ENCODE measurements at regions of chr1 and their contacts with region 1.

Region 1: DNA sequence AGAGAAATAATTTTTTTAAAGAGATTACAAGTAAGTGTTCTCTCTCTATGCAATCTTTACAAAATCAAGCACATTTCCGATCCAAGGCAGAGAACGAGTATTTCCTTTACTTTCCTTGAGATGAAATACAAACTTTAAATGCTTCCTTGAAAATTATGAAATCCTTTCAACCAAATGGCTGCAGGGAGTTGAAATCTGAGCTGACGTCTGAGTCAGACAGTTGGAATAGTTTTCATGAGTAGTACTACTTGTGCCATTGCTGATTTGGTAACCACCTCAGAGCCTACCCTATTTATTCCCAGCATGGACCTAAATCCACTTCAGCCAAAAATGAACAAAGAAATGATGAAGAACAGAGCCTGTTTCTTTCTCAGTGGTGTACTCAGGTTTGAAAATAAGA is 183.6 kb downstream of the GIPC2 start:
- DNase-seq: peak; percentile 94
- H3K4me3 Mint-ChIP-seq: peak overlapping the region; percentile 20
- H3K27ac Mint-ChIP-seq: peak overlapping the region; percentile 63
- H3K4me1 Mint-ChIP-seq: peaks cover 42% of the 10 kb centered on the region
- H3K27me3 Mint-ChIP-seq: no peaks in the 10 kb centered on the region
- CTCF ChIP-seq: no peak

Region 2: DNA sequence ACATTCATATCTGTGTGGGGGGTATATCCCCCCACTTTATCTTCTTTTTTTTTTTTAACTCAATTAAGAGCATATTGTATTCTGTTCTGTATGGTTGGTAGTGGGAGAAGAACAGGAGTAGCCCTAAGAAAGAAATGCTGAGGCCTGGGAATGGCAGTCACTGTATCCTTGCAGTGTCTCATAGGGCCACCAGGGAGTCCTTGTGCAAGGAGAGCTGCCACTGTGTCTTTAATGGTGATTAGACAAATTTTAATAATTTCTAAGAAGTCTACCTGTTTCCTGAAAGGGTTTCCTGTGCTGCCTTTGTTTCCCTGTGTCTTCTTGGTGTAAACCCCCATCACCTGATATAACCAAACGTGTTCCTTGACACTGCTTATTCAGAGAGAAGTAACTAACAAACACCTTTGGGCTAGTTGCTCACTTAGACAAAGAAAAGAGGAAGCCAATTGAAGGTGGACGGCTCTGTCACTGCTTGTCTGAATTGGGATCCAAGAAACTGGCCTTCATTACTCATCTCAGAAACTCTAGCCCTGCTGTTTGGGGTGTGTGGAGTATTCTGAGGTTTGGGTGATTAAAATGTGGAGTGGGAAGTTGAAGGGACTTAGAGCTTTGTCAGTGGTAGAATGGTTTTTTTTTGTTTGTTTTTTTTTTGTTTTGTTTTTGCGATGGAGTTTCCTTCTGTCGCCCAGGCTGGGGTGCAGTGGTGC is 168.3 kb before region 1 on chr1:
- CTCF ChIA-PET with region 1: no interaction called
- POLR2A ChIA-PET with region 1: no interaction called
- intact Hi-C with region 1: no loop called
- DNase-seq: no peak
- H3K4me3 Mint-ChIP-seq: no peak overlapping the region
- H3K27ac Mint-ChIP-seq: no peak overlapping the region
- H3K4me1 Mint-ChIP-seq: peaks cover under 1% of the 10 kb centered on the region
- H3K27me3 Mint-ChIP-seq: no peaks in the 10 kb centered on the region
- CTCF ChIP-seq: no peak

Region 3: GRCh38 chr1:78101514-78101913 is 127.8 kb before region 1 on chr1:
- CTCF ChIA-PET with region 1: no interaction called
- POLR2A ChIA-PET with region 1: no interaction called
- intact Hi-C with region 1: no loop called
- DNase-seq: peak; percentile 45
- H3K4me3 Mint-ChIP-seq: no peak overlapping the region
- H3K27ac Mint-ChIP-seq: peak overlapping the region; percentile 35
- H3K4me1 Mint-ChIP-seq: peaks cover 14% of the 10 kb centered on the region
- H3K27me3 Mint-ChIP-seq: no peaks in the 10 kb centered on the region
- CTCF ChIP-seq: no peak

Region 4: DNA sequence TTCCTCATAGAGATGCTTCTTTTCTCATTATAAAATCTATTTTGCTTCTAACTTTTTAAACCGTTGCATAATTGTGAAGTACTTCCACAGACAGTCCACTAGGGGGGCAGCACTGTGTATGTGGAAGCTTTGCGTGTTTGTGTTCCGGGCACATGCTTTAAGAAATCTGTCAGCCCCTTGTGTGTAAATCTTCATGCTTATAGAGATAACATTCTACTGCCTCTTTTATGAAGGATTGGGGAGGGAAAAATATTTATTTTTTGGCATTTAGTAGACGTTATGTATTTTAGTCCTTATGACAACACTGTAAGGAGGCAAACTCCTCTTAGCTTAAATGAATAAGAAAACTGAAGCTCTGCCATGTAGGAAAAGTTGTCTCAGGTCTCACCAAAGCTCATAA is 104.2 kb after region 1 on chr1:
- CTCF ChIA-PET with region 1: no interaction called
- POLR2A ChIA-PET with region 1: no interaction called
- intact Hi-C with region 1: no loop called
- DNase-seq: peak; percentile 45
- H3K4me3 Mint-ChIP-seq: no peak overlapping the region
- H3K27ac Mint-ChIP-seq: no peak overlapping the region
- H3K4me1 Mint-ChIP-seq: no peaks in the 10 kb centered on the region
- H3K27me3 Mint-ChIP-seq: no peaks in the 10 kb centered on the region
- CTCF ChIP-seq: peak; percentile 56

Region 5: DNA sequence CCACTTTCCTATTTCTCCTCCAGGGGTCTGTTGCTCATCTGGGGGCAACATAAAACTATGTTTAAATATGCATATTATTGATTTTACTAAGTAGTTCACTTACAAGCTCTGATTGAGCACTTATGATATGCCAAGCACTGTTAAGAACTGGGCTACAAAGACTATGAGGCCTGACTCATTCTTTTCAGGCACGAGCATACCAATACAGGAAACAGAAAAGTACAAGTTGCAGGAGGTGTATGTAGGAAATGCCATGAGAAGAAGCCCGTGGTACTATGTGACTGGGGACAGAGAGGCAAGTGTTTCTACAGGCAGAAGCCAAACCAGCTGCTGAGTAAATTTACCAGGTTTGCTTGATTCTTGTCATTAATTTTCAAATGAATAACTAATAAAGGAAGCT is 141.0 kb after region 1 on chr1:
- CTCF ChIA-PET with region 1: no interaction called
- POLR2A ChIA-PET with region 1: no interaction called
- intact Hi-C with region 1: loop called (anchors 10 kb)
- DNase-seq: peak; percentile 56
- H3K4me3 Mint-ChIP-seq: peak overlapping the region; percentile 19
- H3K27ac Mint-ChIP-seq: peak overlapping the region; percentile 96
- H3K4me1 Mint-ChIP-seq: peaks cover 40% of the 10 kb centered on the region
- H3K27me3 Mint-ChIP-seq: no peaks in the 10 kb centered on the region
- CTCF ChIP-seq: no peak